ENCODE measurements at regions of chr14 and their contacts with region 1.

Region 1: GRCh38 chr14:87896393-87897380 is 96.3 kb downstream of the GALC start:
- DNase-seq: no peak

Region 2: DNA sequence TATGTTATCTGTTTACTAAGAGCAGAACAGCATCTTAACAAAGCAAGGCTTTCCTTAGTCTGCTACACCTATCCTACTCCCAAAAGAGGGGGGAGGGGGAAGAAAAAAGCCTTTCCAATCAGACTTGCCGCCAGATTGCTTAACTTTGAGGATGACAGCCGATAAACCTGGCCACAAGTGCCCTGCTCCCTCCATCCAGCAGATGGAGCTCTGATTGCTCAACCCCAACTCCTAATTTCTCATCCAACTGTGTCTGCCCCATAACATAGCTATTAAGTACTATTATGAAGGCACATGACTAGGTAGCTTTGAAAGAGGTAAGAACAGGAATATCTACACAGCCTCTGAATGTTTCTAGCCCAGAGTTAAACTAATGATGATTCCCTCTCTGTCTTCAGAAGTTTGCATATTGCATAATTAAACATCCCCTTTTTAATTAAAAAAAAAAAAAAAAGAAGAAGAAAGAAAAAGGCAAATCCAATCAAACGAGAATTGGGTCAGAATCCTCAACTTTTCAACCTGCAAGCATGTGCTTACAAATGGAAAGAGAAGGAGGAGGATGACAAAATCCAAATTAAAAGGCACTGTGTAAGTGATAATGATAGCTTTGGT is 151.1 kb before region 1 on chr14:
- intact Hi-C with region 1: loop called (anchors 2 kb)
- DNase-seq: peak in 1 of 10 donors; percentile 26

Region 3: DNA sequence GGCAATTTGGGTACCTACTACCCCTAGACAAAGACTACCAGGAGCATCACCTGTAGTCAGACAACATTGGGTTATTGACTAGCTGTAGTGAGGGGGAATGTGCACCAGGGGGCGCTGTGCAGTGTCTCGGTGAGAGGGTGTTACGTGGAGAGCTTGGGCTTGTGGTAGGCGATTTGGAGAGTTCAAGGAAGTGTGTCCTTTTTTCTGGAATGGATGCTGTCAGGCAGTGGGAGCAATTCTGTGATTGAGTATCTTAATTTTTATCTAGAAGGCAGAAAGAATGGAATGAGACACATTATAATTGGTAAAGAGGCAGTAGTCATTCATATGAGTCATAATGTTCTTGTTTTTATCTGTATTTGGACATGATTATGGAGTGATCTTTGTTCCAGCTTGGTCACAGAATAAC is 91.4 kb before region 1 on chr14:
- intact Hi-C with region 1: loop called (anchors 5 kb)
- DNase-seq: peak in 3 of 10 donors; percentile 14 to 34 (median 29)

Region 4: GRCh38 chr14:87916103-87916885 is 19.6 kb after region 1 on chr14:
- intact Hi-C with region 1: no loop called
- DNase-seq: peak in 1 of 10 donors; percentile 82

Region 5: DNA sequence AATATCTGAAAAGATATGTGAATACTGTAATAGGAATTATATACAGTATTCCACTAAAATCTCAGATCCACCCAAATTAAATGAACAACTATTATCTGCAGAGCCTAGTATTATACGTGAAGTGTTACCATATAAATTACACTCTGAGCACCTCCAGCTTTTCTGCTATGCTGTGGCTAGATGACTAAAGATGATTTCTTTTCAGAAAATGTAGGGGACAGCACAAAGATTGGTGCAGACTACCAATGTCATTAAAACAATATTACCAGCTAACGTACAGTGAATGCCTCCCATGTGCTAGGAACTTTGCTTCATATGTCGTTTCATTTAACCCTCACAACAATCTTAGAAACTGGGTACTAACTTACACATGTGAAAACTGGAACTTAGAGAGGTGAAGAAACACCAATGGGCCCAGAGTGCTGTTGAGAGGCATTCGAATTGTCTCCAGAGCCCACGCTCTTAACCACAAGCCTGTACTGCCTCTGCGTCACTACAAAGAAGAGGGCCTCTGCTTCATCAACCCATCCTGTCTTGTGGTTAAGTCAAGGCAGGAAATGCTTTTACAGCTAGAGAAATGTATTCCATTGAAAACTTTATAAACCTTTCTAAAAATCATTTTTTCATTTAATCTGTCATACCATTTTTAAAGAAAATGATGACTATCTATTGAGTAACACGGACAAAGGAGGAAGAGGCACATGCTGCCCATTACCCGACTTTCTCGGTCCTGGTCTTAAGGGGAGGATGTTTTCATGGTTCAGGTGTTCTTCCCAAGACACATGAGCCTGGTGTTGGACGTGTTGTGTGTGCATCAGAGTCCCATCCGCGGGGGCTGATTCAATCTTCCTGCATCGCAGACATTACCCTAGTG is 109.5 kb after region 1 on chr14:
- intact Hi-C with region 1: no loop called
- DNase-seq: no peak

Measured in posterior cingulate gyrus (tissue), 11 donors.